ENCODE measurements at regions of chr3 and their contacts with region 1.

Region 1: DNA sequence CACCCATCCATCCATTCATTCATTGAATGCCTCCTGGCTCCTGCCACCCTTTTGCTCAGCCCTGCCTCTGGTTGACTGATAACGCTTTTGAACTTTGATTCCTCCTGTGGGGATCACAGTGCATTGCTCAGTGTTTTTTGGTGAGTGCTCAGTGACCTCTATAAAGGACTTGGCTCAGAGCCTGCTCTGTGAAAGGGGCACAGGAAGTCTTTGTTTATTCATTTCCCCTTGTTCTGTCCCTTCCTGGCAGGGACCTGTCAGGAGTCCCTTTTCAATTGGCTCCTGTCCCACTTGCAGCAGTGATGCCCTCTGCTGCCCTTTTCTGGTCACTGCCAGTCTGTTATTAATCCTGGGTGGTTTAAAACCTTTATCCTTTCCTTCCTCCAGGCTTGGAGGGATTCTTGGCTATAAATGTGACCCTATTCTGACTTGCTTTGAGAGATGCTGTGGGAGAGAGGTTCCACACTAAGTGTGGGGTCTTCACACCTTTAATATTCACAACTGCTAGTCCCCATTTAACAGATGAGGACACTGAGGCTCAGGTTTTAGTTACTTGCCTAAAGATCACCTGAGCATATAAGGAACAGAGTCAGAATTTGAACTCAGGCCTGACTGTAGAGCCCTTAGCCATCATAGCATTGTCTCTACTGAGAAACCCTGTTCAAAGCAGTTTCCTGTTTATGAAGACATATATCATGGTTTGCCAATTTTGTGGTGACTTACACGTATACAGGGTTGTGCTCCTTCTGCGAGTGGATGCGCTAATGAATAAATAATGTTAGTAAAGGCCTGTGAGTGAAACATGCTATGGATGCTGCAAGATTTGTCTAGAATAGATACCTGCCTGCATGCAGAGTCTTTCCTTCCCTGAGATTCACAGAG is 23.2 kb upstream of the TATDN2 start:
- DNase-seq: peak; percentile 38 to 83 (median 54)
- ATAC-seq: peak; percentile 67
- H3K4me3 ChIP-seq: no peak overlapping the region
- H3K4me3 Mint-ChIP-seq: peak overlapping the region; percentile 35
- H3K27ac ChIP-seq: peak overlapping the region in 1 of 2 donors; percentile 52
- H3K27ac Mint-ChIP-seq: peak overlapping the region; percentile 81
- H3K4me1 ChIP-seq: peaks cover 72% of the 10 kb centered on the region
- H3K4me1 Mint-ChIP-seq: peaks cover 55% of the 10 kb centered on the region
- H3K27me3 ChIP-seq: no peaks in the 10 kb centered on the region
- H3K27me3 Mint-ChIP-seq: no peaks in the 10 kb centered on the region
- CTCF ChIP-seq: peak; percentile 72

Region 2: GRCh38 chr3:9843715-9844438 is 381.1 kb before region 1 on chr3 and contains the start of gene RPUSD3:
- CTCF ChIA-PET with region 1: no interaction called
- POLR2A ChIA-PET with region 1: no interaction called
- intact Hi-C with region 1: loop called in 1 of 2 experiments (anchors 10 kb)
- DNase-seq: peak; percentile 93 to 98 (median 96)
- ATAC-seq: peak; percentile 98
- H3K4me3 ChIP-seq: peak within 1 kb of the TSS; percentile 73
- H3K4me3 Mint-ChIP-seq: peak within 1 kb of the TSS; percentile 98
- H3K27ac ChIP-seq: peak within 1 kb of the TSS; percentile 21 to 38
- H3K27ac Mint-ChIP-seq: peak within 1 kb of the TSS; percentile 80
- H3K4me1 ChIP-seq: peaks cover 28% of the 10 kb centered on the region
- H3K4me1 Mint-ChIP-seq: peaks cover 28% of the 10 kb centered on the region
- H3K27me3 ChIP-seq: no peaks in the 10 kb centered on the region
- H3K27me3 Mint-ChIP-seq: no peaks in the 10 kb centered on the region
- CTCF ChIP-seq: no peak
- total RNA-seq, gene RPUSD3: 7.9 to 8.1 TPM

Region 3: DNA sequence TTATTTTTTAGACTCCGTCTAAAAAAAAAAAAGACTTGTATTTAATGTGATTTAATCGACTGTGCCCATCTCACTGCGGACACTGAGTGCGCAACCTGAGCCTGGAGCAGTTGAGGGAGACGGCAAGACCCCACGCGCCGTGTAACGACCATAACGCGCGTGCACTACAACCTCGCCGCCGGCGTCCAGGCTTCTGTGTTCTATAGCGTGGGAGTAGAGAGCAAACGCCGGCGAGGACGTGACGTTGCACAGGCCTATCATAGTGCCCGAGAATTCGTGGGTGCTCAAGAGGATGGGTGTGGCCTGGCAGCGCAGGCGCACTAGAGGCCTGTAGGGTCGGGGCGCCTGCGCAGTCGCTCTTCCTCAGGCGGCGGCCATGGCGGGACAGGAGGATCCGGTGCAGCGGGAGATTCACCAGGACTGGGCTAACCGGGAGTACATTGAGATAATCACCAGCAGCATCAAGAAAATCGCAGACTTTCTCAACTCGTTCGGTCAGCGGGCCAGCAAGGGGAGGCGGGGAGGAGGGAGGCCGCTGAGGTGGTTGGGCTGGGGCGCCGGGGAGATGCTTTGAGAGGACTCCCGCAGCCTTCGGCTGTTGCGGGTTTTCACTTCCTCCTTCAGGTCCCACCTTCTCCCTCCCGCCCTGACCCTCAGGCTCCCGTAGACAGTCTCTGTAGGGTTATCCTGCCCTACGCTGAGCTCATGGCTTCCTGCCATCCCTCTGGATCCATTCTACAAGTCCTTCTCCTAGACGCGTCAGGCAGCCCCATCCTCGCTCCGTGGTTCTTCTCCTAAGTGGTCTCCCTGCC is 109.5 kb before region 1 on chr3 and contains the start of gene BRK1:
- CTCF ChIA-PET with region 1: no interaction called
- POLR2A ChIA-PET with region 1: no interaction called
- intact Hi-C with region 1: loop called in 1 of 2 experiments (anchors 1 kb)
- DNase-seq: peak; percentile 83 to 98 (median 92)
- ATAC-seq: peak; percentile 97
- H3K4me3 ChIP-seq: peak within 1 kb of the TSS; percentile 98
- H3K4me3 Mint-ChIP-seq: peak within 1 kb of the TSS; percentile 95
- H3K27ac ChIP-seq: peak within 1 kb of the TSS; percentile 64 to 74
- H3K27ac Mint-ChIP-seq: peak within 1 kb of the TSS; percentile 88
- H3K4me1 ChIP-seq: peaks cover 41% of the 10 kb centered on the region
- H3K4me1 Mint-ChIP-seq: peaks cover 36% of the 10 kb centered on the region
- H3K27me3 ChIP-seq: no peaks in the 10 kb centered on the region
- H3K27me3 Mint-ChIP-seq: no peaks in the 10 kb centered on the region
- CTCF ChIP-seq: no peak
- total RNA-seq, gene BRK1: 33.1 to 33.8 TPM

Region 4: GRCh38 chr3:10164546-10165393 is 60.3 kb before region 1 on chr3 and contains the start of gene IRAK2:
- CTCF ChIA-PET with region 1: no interaction called
- POLR2A ChIA-PET with region 1: no interaction called
- intact Hi-C with region 1: loop called (anchors 1 kb)
- DNase-seq: peak in 13 of 14 experiments; percentile 33 to 84 (median 48)
- ATAC-seq: peak; percentile 80
- H3K4me3 ChIP-seq: peak within 1 kb of the TSS; percentile 72
- H3K4me3 Mint-ChIP-seq: peak within 1 kb of the TSS; percentile 88
- H3K27ac ChIP-seq: peak within 1 kb of the TSS in 1 of 2 donors; percentile 50
- H3K27ac Mint-ChIP-seq: peak within 1 kb of the TSS; percentile 12
- H3K4me1 ChIP-seq: peaks cover 23% of the 10 kb centered on the region
- H3K4me1 Mint-ChIP-seq: peaks cover 28% of the 10 kb centered on the region
- H3K27me3 ChIP-seq: no peaks in the 10 kb centered on the region
- H3K27me3 Mint-ChIP-seq: no peaks in the 10 kb centered on the region
- CTCF ChIP-seq: peak; percentile 95
- total RNA-seq, gene IRAK2: 1.4 to 1.6 TPM

Region 5: GRCh38 chr3:10198761-10199649 is 26.0 kb before region 1 on chr3:
- CTCF ChIA-PET with region 1: interaction called, 3 read pairs
- POLR2A ChIA-PET with region 1: interaction called, 28 read pairs
- intact Hi-C with region 1: loop called in 1 of 2 experiments (anchors 2 kb)
- DNase-seq: peak; percentile 50 to 94 (median 64)
- ATAC-seq: peak; percentile 81
- H3K4me3 ChIP-seq: no peak overlapping the region
- H3K4me3 Mint-ChIP-seq: peak overlapping the region; percentile 75
- H3K27ac ChIP-seq: peak overlapping the region; percentile 86 to 95
- H3K27ac Mint-ChIP-seq: peak overlapping the region; percentile 93
- H3K4me1 ChIP-seq: peaks cover 83% of the 10 kb centered on the region
- H3K4me1 Mint-ChIP-seq: peaks cover 71% of the 10 kb centered on the region
- H3K27me3 ChIP-seq: no peaks in the 10 kb centered on the region
- H3K27me3 Mint-ChIP-seq: no peaks in the 10 kb centered on the region
- CTCF ChIP-seq: no peak

Region 6: DNA sequence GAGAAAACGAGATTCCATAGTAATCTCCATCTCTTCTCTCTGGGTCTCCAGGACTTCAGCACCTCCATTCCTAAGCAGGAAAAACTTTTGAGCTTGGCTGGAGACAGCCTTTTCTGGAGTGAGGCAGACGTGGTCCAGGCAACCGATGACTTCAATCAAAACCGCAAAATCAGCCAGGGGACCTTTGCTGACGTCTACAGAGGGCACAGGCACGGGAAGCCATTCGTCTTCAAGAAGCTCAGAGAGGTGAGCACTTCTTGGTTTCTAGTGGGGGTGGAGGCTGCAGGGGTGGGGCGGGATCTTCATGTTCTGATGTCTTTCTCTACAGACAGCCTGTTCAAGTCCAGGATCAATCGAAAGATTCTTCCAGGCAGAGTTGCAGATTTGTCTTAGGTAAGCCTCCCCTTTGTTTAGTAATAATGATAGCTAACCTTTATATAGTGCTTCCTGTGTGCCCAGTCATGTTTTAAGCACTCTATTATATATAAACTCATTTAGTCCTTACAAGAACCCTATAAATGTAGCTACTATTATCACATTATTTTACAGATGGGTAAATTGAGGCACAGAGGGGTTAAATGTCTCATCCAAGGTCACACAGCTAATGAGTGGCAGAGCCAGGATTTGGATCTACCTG is 11.8 kb before region 1 on chr3:
- CTCF ChIA-PET with region 1: no interaction called
- POLR2A ChIA-PET with region 1: no interaction called
- intact Hi-C with region 1: no loop called
- DNase-seq: no peak
- ATAC-seq: no peak
- H3K4me3 ChIP-seq: no peak overlapping the region
- H3K4me3 Mint-ChIP-seq: no peak overlapping the region
- H3K27ac ChIP-seq: no peak overlapping the region
- H3K27ac Mint-ChIP-seq: no peak overlapping the region
- H3K4me1 ChIP-seq: no peaks in the 10 kb centered on the region
- H3K4me1 Mint-ChIP-seq: no peaks in the 10 kb centered on the region
- H3K27me3 ChIP-seq: no peaks in the 10 kb centered on the region
- H3K27me3 Mint-ChIP-seq: no peaks in the 10 kb centered on the region
- CTCF ChIP-seq: no peak